ENCODE measurements at regions of chr1 and their contacts with region 1.

Region 1: GRCh38 chr1:169711469-169712281 is at the start of gene SELL:
- DNase-seq: peak; percentile 74 to 80
- H3K4me3 ChIP-seq: no peak within 1 kb of the TSS
- H3K4me3 Mint-ChIP-seq: peak within 1 kb of the TSS; percentile 52
- H3K27ac Mint-ChIP-seq: no peak within 1 kb of the TSS
- H3K4me1 ChIP-seq: peaks cover 6% of the 10 kb centered on the region; the same call in 1 of the 2 replicates
- H3K4me1 Mint-ChIP-seq: peaks cover 9% of the 10 kb centered on the region
- H3K27me3 ChIP-seq: no peaks in the 10 kb centered on the region
- H3K27me3 Mint-ChIP-seq: peaks cover 4% of the 10 kb centered on the region
- CTCF ChIP-seq: peak; percentile 80 to 88
- total RNA-seq, gene SELL: not detected in 2 replicates

Region 2: GRCh38 chr1:169466259-169467230 is 245.1 kb before region 1 on chr1:
- CTCF ChIA-PET with region 1: no interaction called
- POLR2A ChIA-PET with region 1: no interaction called
- intact Hi-C with region 1: loop called (anchors 2 kb)
- DNase-seq: peak in 1 of 2 experiments; percentile 56
- H3K4me3 ChIP-seq: no peak overlapping the region
- H3K4me3 Mint-ChIP-seq: no peak overlapping the region
- H3K27ac Mint-ChIP-seq: no peak overlapping the region
- H3K4me1 ChIP-seq: no peaks in the 10 kb centered on the region
- H3K4me1 Mint-ChIP-seq: no peaks in the 10 kb centered on the region
- H3K27me3 ChIP-seq: no peaks in the 10 kb centered on the region
- H3K27me3 Mint-ChIP-seq: no peaks in the 10 kb centered on the region
- CTCF ChIP-seq: peak; percentile 24 to 60

Region 3: DNA sequence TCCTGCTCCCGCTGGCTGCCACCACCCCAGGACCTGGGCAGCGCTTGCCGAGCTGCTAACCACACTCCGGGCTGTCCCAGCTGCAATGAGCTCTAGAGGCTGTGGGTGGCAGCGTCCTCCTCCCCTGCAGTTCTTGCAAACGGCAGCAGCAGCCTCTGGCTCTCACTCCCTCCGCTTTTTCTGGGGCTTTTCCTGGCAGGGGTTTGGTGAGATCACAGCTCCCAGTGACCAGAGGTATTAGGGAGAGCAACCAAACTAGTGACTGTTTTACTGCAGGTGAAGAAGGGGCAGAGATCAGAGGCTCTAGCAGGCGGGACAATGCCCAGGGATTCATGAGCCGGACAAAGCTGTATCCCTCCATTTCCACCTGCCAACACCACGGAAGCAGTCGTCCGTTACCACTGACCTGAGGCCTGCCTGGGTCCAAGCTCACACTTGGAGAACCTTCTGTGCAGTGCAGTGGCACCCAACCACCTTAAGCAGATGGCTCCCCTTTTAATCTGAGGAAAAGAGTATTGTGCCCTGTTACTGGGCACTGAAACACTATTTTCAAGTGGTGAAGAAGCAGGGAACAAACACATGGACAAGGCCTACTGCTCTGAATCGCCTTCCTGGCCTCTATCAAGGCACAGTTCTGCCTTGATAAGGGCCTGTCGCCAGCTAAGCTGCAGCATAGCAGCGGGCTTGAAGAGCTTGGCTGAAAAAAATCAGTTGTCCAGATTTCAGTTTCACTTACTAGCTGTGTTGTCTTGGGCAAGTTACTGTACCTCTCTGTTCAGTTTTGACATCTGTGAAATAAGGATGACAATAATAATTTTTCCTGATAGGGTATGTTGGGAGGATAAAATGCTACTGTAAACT is 125.0 kb before region 1 on chr1 and contains the start of gene F5:
- CTCF ChIA-PET with region 1: interaction called, 11 read pairs
- POLR2A ChIA-PET with region 1: no interaction called
- intact Hi-C with region 1: no loop called
- DNase-seq: peak; percentile 75 to 80
- H3K4me3 ChIP-seq: peak within 1 kb of the TSS; percentile 23; the same call in 1 of the 2 replicates
- H3K4me3 Mint-ChIP-seq: peak within 1 kb of the TSS; percentile 54
- H3K27ac Mint-ChIP-seq: no peak within 1 kb of the TSS
- H3K4me1 ChIP-seq: peaks cover 6% of the 10 kb centered on the region; the same call in 1 of the 2 replicates
- H3K4me1 Mint-ChIP-seq: peaks cover 5% of the 10 kb centered on the region
- H3K27me3 ChIP-seq: no peaks in the 10 kb centered on the region
- H3K27me3 Mint-ChIP-seq: no peaks in the 10 kb centered on the region
- CTCF ChIP-seq: peak; percentile 43 to 64
- total RNA-seq, gene F5: 0.50 and 0.74 TPM in 2 replicates

Region 4: DNA sequence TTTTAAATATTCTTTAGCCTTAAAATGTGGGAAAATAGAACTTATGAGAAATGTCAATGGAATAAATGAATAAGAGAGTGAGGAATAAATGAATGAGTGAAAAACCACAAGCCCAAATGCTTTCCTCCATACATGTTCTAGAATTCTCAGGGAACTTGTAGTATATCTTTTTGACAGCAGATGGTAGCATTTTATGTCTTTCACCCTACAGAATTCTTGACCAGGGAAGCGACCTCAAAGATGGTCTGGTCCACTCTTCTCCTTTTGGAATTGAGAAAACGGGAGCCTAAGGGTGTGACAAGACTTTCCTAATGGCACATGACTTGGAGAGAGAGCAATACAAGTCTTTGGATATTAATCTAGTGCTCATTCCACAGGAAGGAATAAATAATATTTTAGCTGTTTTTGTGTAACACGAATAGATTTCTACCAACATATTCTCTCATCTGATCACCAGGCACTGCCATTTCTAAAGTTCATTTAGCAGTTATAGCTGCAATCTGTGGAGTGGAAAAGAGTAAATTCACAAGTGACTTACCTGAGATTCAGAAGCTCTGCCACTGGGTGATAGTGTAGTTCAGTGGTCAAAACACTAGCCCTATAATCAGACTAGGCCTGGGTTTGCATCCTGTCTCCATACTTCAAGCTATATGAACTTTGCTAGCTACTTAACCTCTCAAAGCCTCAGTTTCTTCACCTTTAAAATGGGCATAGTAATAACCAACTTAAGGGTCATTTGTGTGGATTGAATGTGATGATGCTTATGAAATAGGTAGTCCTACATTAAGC is 110.4 kb before region 1 on chr1:
- CTCF ChIA-PET with region 1: interaction called, 23 read pairs
- POLR2A ChIA-PET with region 1: no interaction called
- intact Hi-C with region 1: loop called (anchors 1 kb)
- DNase-seq: peak in 1 of 2 experiments; percentile 34
- H3K4me3 ChIP-seq: no peak overlapping the region
- H3K4me3 Mint-ChIP-seq: no peak overlapping the region
- H3K27ac Mint-ChIP-seq: no peak overlapping the region
- H3K4me1 ChIP-seq: no peaks in the 10 kb centered on the region
- H3K4me1 Mint-ChIP-seq: no peaks in the 10 kb centered on the region
- H3K27me3 ChIP-seq: no peaks in the 10 kb centered on the region; the same call in 1 of the 2 replicates
- H3K27me3 Mint-ChIP-seq: peaks cover 6% of the 10 kb centered on the region
- CTCF ChIP-seq: peak; percentile 35 to 41

Region 5: DNA sequence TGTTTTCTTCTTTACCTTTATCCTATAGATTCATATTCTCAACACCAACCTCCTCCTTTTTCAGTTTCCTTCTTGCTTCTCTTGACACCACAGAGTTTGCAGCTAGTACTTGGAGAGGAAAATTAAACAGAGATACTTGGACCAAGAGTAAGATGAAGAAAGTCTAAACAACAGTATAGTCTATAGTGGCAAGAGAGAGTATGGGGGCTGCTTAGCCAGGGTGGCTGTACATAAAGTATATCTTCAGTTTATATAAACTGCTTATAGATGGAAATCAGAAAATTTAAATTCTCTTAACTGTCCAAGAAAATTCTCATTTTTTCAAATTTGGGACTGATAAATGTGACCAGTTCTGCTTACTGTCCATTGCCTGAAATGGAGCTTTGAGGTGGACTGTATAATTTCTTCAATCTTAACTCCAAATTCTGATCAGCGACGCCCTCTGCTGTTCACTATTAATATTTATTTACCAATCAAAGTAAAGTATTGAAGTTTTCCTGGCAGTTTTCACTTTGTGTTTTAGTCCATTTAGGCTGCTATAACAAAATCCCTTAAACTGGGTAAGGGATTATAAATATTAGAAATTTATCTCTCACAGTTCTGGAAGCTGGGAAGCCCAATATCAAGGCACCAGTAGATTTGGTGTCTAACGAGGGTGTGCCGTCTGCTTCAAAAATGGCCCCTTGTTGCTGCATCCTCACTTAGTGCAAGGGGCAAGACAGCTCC is 97.9 kb after region 1 on chr1:
- CTCF ChIA-PET with region 1: interaction called, 7 read pairs
- POLR2A ChIA-PET with region 1: no interaction called
- intact Hi-C with region 1: loop called (anchors 1 kb)
- DNase-seq: peak in 1 of 2 experiments; percentile 51
- H3K4me3 ChIP-seq: no peak overlapping the region
- H3K4me3 Mint-ChIP-seq: no peak overlapping the region
- H3K27ac Mint-ChIP-seq: no peak overlapping the region
- H3K4me1 ChIP-seq: no peaks in the 10 kb centered on the region
- H3K4me1 Mint-ChIP-seq: no peaks in the 10 kb centered on the region
- H3K27me3 ChIP-seq: no peaks in the 10 kb centered on the region
- H3K27me3 Mint-ChIP-seq: no peaks in the 10 kb centered on the region
- CTCF ChIP-seq: peak; percentile 34 to 46